Posterior cingulate gyrus (tissue), 11 donors: ENCODE measurements at regions of chr3 and their contacts with region 1.

Region 1: DNA sequence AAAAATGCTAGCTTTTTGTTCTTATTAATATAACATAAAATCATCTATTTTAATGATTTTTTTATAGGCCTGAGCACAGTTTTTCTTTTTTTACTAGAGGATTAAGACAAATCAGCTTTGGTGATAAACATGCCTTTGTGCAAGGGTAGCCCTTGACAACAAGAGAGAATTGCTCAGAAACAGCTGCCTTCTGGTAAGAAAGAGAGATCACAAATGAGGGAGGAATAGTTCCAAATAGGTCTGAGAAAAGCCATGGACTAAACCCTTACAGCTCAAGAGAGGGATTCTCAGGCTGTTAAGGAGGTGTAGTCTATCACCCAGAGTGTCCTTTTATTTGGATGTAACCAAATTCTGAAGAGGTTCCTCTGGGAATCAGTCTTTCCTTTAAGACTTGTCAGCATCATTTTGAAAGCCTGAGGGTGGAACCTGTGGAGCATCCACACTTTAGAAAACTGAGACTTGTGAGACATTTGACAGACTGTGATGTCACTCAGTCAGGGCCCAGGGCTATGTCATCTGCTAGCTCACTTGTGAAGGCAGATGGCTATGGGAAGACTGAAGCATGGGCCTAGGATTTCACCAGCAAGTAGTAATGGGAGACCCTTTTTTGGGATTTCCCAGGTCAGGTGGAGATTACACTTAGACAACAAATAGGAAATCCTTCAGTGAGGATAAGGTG is 102.9 kb upstream of the KCNAB1 start:
- DNase-seq: no peak

Region 2: DNA sequence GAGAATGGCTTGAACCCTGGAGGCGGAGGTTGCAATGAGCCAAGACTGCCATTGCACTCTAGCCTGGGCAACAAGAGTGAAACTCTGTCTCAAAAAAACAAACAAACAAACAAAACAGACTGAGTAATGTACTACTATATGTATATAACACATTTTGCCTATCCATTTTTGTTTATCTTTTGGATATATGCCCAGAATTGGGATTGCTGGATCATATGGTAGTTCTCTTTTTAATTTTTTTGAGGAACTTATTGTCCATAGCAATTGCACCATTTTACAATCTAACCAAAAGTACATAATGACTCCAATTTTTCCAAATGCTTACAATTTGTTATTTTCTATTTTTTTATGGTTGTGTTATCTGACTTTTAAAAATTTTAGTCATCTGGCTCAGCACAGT is 99.7 kb before region 1 on chr3:
- intact Hi-C with region 1: no loop called
- DNase-seq: no peak

Region 3: GRCh38 chr3:156509189-156510174 is 492.0 kb after region 1 on chr3:
- intact Hi-C with region 1: loop called (anchors 10 kb)
- DNase-seq: no peak